ENCODE measurements at regions of chr2 and their contacts with region 1.

Region 1: GRCh38 chr2:44955593-44956392 is 14.3 kb downstream of the SIX3 start:
- DNase-seq: peak; percentile 50
- ATAC-seq: peak; percentile 83
- H3K4me3 ChIP-seq: peak overlapping the region in 1 of 3 experiments; percentile 63; a peak in 1 of 6 replicates
- H3K27ac ChIP-seq: no peak overlapping the region
- H3K4me1 ChIP-seq: peaks cover 32% of the 10 kb centered on the region
- H3K27me3 ChIP-seq: peaks cover 25 to 90% of the 10 kb centered on the region in 2 experiments; a peak in 4 of 5 replicates
- CTCF ChIP-seq: peak; percentile 99
- EP300 ChIP-seq: no peak
- POLR2A ChIP-seq: no peak
- RAD21 ChIP-seq: peak; percentile 97

Region 2: GRCh38 chr2:44244129-44244871 is 711.5 kb before region 1 on chr2:
- CTCF ChIA-PET with region 1: interaction called, 5 read pairs
- POLR2A ChIA-PET with region 1: no interaction called
- in situ Hi-C with region 1: no loop called
- intact Hi-C with region 1: loop called (anchors 5 kb)
- DNase-seq: peak; percentile 77
- ATAC-seq: peak; percentile 75
- H3K4me3 ChIP-seq: peak overlapping the region in 2 of 3 experiments; percentile 29 to 45; a peak in 3 of 6 replicates
- H3K27ac ChIP-seq: no peak overlapping the region
- H3K4me1 ChIP-seq: peaks cover 21% of the 10 kb centered on the region
- H3K27me3 ChIP-seq: no peaks in the 10 kb centered on the region
- CTCF ChIP-seq: peak; percentile 57
- EP300 ChIP-seq: no peak
- POLR2A ChIP-seq: no peak
- RAD21 ChIP-seq: 0 out of 2 replicates have a peak, but pooled peaks have one; percentile 25

Region 3: DNA sequence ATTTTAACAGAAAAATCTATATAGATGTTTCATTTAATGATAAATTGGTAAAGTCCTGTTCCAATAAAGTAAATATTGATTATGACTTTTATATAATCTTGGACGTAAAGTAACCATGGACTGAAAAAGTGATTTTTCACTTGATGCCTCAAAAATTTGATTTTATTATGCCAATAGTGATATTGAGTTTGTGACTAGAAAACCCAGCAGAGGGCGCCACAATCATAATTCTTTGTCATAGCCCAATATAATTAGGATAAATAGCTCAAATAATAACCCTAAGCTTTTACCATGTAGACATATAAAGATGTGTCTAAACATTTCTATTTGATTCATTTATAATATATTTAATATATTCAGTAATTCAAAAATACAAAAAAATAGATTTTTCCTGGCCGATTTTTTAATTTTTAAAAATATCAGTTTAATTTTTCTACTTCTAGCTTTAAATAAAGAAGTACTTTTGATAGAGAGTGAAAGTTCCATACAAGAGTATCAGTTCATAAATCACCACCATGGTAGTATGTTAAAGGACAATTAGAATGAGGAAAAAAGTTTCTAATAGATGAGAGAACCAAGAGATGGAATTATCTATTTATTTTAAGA is 563.4 kb before region 1 on chr2:
- CTCF ChIA-PET with region 1: interaction called, 15 read pairs
- POLR2A ChIA-PET with region 1: no interaction called
- in situ Hi-C with region 1: no loop called
- intact Hi-C with region 1: loop called (anchors 1 kb)
- DNase-seq: peak; percentile 47
- ATAC-seq: no peak
- H3K4me3 ChIP-seq: no peak overlapping the region
- H3K27ac ChIP-seq: no peak overlapping the region
- H3K4me1 ChIP-seq: no peaks in the 10 kb centered on the region
- H3K27me3 ChIP-seq: no peaks in the 10 kb centered on the region
- CTCF ChIP-seq: peak; percentile 56
- EP300 ChIP-seq: no peak
- POLR2A ChIP-seq: no peak
- RAD21 ChIP-seq: no peak; the same call in 1 of the 2 replicates

Region 4: DNA sequence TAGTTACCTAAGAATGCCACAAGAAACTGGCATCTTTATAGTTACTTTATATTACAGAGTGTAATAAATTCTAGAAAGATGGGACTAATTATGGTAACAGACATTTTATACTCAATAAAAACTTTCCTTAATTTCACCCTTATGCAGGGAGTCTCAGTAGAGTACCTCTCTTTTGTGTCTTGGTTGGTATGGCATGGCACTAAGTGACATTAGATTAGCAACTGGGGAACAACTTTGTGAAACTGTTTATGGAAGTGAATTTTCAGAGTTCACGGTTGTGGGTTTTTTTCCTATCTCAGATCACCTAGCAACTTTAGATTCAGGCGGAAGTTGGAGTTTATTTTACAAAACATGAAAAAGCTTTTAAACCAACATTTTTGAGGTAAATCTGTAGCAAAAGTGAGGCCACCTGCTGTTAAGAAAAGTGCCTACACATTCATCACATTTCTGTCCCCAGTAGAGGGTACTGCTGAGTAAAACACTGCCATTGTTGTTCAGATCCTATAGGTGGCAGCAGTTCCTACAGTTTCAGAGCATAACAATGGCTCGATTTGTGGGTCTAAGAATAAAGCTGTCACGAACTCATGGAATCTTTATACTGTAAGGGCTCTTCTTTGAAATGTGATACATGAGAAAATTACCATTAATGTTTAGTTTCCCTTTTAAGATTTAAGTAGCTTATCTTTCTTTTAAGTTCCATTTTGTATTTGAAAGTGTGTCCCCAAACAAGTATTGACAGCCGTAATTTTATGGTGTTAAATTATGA is 476.5 kb before region 1 on chr2:
- CTCF ChIA-PET with region 1: interaction called, 67 read pairs
- POLR2A ChIA-PET with region 1: no interaction called
- in situ Hi-C with region 1: loop called (anchors 5 kb)
- intact Hi-C with region 1: loop called (anchors 1 kb)
- DNase-seq: peak; percentile 89
- ATAC-seq: peak; percentile 99
- H3K4me3 ChIP-seq: no peak overlapping the region
- H3K27ac ChIP-seq: no peak overlapping the region
- H3K4me1 ChIP-seq: no peaks in the 10 kb centered on the region
- H3K27me3 ChIP-seq: no peaks in the 10 kb centered on the region
- CTCF ChIP-seq: peak; percentile 99
- EP300 ChIP-seq: no peak
- POLR2A ChIP-seq: no peak
- RAD21 ChIP-seq: peak; percentile 93

Region 5: GRCh38 chr2:44560352-44560751 is 395.4 kb before region 1 on chr2:
- CTCF ChIA-PET with region 1: interaction called, 10 read pairs
- POLR2A ChIA-PET with region 1: no interaction called
- in situ Hi-C with region 1: no loop called
- intact Hi-C with region 1: loop called (anchors 2 kb)
- DNase-seq: no peak
- ATAC-seq: no peak
- H3K4me3 ChIP-seq: no peak overlapping the region
- H3K27ac ChIP-seq: no peak overlapping the region
- H3K4me1 ChIP-seq: 0 out of 2 replicates have a peak, but pooled peaks cover 7% of the 10 kb centered on the region
- H3K27me3 ChIP-seq: no peaks in the 10 kb centered on the region
- CTCF ChIP-seq: peak; percentile 50
- EP300 ChIP-seq: no peak
- POLR2A ChIP-seq: no peak
- RAD21 ChIP-seq: no peak